ENCODE measurements at regions of chr19 and their contacts with region 1.

Region 1: GRCh38 chr19:51422053-51422448 is 4.6 kb upstream of the SIGLEC10 start:
- DNase-seq: peak; percentile 56 to 87
- H3K4me3 ChIP-seq: no peak overlapping the region
- H3K27ac ChIP-seq: no peak overlapping the region
- H3K4me1 ChIP-seq: no peaks in the 10 kb centered on the region
- H3K27me3 ChIP-seq: peaks cover 40% of the 10 kb centered on the region
- CTCF ChIP-seq: peak; percentile 100

Region 2: DNA sequence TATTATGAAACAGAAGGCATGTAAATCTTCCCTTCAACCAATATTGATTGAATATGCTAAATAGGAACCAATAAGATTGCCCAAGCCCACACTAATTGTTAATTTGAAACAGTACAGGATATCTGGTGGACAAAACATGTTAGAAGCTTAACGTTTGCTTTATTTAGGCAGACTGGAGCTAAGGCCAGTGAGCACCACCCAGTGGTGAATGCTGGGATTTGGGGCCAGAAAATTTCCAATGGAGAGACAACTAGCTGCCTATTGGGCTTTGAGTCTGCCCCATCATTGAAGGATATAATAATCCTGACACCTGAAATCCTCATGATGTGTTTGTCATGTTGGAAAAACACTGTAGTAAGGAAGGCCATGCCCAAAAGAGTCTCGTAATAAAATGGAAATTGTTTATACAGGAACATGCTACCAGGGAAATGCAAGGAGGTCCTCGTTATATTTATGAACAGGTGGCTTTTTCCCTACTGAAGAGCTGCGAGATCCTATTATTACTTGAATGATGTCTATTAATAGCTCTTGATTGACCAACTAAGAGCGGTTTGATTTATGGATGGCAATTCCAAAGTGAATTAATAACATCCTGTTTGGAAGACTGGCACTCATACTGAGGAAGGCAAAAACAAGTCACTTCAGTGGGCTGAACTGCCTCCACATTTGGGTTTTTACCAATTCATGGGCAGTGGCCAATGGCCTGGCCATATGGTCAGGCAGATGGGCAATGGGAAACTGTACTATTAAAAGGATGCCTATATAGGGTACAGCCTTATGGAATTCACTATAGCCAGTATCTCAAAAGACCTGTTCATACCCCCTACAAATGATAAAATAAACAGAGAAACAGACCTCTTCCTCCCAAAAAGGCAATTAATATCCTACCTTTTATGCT is 162.5 kb before region 1 on chr19:
- CTCF ChIA-PET with region 1: interaction called, 13 read pairs
- POLR2A ChIA-PET with region 1: no interaction called
- intact Hi-C with region 1: no loop called
- DNase-seq: peak in 1 of 2 experiments; percentile 30
- H3K4me3 ChIP-seq: no peak overlapping the region
- H3K27ac ChIP-seq: no peak overlapping the region
- H3K4me1 ChIP-seq: no peaks in the 10 kb centered on the region
- H3K27me3 ChIP-seq: peaks cover 87% of the 10 kb centered on the region
- CTCF ChIP-seq: peak; percentile 77

Region 3: GRCh38 chr19:51651216-51651846 is 229.3 kb after region 1 on chr19:
- CTCF ChIA-PET with region 1: no interaction called
- POLR2A ChIA-PET with region 1: no interaction called
- intact Hi-C with region 1: loop called (anchors 10 kb)
- DNase-seq: no peak
- H3K4me3 ChIP-seq: no peak overlapping the region
- H3K27ac ChIP-seq: no peak overlapping the region
- H3K4me1 ChIP-seq: no peaks in the 10 kb centered on the region
- H3K27me3 ChIP-seq: peaks cover 60% of the 10 kb centered on the region
- CTCF ChIP-seq: no peak

Region 4: GRCh38 chr19:51792932-51793331 is 370.9 kb after region 1 on chr19:
- CTCF ChIA-PET with region 1: interaction called, 10 read pairs
- POLR2A ChIA-PET with region 1: no interaction called
- intact Hi-C with region 1: no loop called
- DNase-seq: no peak
- H3K4me3 ChIP-seq: no peak overlapping the region
- H3K27ac ChIP-seq: no peak overlapping the region
- H3K4me1 ChIP-seq: no peaks in the 10 kb centered on the region
- H3K27me3 ChIP-seq: peaks cover 15% of the 10 kb centered on the region; the same call in 1 of the 2 replicates
- CTCF ChIP-seq: no peak